HEK293 (cell line): ENCODE measurements at regions of chr10 and their contacts with region 1.

Region 1: GRCh38 chr10:120586471-120586872 is 129.4 kb downstream of the PLPP4 start:
- H3K4me3 ChIP-seq: no peak overlapping the region
- H3K27ac ChIP-seq: no peak overlapping the region
- H3K4me1 ChIP-seq: no peaks in the 10 kb centered on the region
- CTCF ChIP-seq: no peak

Region 2: DNA sequence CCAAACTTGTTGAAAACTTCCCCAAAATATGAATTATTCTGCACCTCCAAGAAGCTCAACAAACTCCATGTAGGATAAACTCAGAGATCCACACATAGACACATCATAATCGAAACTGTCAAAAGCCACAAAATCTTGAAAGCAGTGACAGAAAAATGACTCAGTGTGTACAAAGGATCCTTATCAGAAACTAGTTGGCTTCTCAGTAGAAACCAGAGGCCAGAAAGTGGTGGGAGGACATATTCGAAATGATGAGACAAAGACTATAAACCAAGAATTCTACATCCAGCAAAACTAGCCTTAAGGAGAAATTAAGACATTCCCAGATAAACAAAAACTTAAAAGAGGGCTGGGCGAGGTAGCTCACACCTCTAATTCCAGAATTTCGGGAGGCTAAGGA is 752.3 kb before region 1 on chr10:
- CTCF ChIA-PET with region 1: no interaction called
- POLR2A ChIA-PET with region 1: no interaction called
- H3K4me3 ChIP-seq: no peak overlapping the region
- H3K27ac ChIP-seq: no peak overlapping the region
- H3K4me1 ChIP-seq: no peaks in the 10 kb centered on the region
- CTCF ChIP-seq: no peak

Region 3: DNA sequence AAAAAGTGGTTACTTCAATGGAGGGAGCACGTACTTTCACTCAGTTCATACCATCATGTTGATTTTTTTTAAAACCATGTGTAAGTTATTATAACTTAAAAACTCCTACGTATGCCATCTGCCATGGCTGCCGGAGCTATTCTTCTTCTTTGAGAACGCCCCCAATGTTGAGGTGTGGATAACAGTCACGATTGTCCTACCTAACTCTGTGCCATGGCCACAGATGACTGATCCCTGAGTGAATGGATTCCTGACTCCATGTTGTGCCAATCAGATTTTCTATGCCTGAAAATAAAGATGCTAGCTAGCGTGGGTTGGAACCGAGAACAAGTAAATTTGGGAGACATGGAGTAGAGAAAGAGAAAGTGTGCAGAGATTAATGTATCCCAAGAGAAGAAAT is 719.2 kb before region 1 on chr10:
- CTCF ChIA-PET with region 1: no interaction called
- POLR2A ChIA-PET with region 1: interaction called, 10 read pairs
- H3K4me3 ChIP-seq: no peak overlapping the region
- H3K27ac ChIP-seq: no peak overlapping the region; the same call in 1 of the 2 replicates
- H3K4me1 ChIP-seq: no peaks in the 10 kb centered on the region; the same call in 1 of the 2 replicates
- CTCF ChIP-seq: no peak

Region 4: DNA sequence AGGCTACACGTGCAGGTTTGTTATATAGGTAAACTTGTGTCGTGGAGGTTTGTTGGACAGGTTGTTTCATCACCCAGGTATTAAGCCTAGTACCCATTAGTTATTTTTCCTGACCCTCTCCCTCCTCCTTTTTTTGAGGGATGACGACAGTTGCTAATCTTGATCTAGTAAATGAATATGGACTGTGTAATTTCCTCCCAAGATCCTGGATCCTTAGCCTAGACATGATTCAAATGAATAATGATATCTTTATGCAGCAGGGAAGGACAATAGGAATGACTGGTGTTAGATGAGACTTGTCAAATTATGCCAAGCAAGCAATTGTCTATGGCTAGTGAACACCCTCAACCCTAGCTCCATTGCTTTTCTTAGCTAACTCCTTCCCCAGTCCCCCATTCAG is 26.7 kb after region 1 on chr10:
- CTCF ChIA-PET with region 1: no interaction called
- POLR2A ChIA-PET with region 1: no interaction called
- H3K4me3 ChIP-seq: no peak overlapping the region
- H3K27ac ChIP-seq: no peak overlapping the region
- H3K4me1 ChIP-seq: no peaks in the 10 kb centered on the region
- CTCF ChIP-seq: no peak

Region 5: GRCh38 chr10:120873734-120874133 is 287.3 kb after region 1 on chr10:
- CTCF ChIA-PET with region 1: no interaction called
- POLR2A ChIA-PET with region 1: no interaction called
- H3K4me3 ChIP-seq: no peak overlapping the region
- H3K27ac ChIP-seq: no peak overlapping the region
- H3K4me1 ChIP-seq: no peaks in the 10 kb centered on the region
- CTCF ChIP-seq: no peak